ENCODE measurements at regions of chr12 and their contacts with region 1.

Region 1: GRCh38 chr12:109393437-109394345 is 46.0 kb downstream of the MYO1H start:
- DNase-seq: peak; percentile 81
- H3K4me3 Mint-ChIP-seq: no peak overlapping the region
- H3K27ac Mint-ChIP-seq: no peak overlapping the region
- H3K4me1 Mint-ChIP-seq: no peaks in the 10 kb centered on the region
- H3K27me3 Mint-ChIP-seq: peaks cover 15% of the 10 kb centered on the region

Region 2: DNA sequence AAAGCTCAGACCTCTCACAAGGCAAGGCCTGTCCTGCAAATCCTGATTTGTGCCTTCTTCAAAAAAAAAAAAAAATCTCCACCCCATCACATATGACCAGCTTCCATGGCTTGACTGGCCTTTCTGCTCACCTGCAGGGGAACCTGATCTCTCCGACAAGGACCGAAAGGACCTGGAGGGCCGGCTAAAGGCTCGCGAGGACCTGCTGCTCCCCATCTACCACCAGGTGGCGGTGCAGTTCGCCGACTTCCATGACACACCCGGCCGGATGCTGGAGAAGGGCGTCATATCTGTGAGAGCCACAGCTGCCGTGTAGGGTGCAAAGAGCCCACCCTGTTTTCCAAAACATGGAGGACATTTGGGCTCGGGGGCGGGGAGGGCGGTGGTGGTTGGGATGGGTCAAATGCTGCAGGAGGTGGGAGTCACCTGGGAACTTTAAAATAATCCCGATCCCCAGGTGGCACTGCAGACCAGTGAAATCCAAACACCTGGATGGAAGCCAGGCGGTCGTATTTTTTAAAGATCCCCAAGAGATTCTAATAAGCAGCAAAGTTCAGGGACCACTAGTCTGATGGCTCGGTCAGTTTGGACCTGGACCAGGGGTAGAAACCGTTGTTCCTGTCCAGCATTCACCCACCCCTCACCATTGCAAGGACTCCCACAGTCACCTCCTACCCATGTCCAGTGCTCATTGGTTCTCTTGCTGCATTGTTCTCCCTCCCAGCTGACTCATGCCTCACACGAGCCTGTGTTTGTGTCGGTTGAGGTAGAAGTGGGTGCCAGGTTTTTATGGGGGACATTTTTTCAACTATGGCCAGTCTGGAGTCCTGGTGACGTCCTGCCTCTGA is 129.4 kb before region 1 on chr12:
- intact Hi-C with region 1: loop called (anchors 2 kb)
- DNase-seq: peak; percentile 78
- H3K4me3 Mint-ChIP-seq: no peak overlapping the region
- H3K27ac Mint-ChIP-seq: no peak overlapping the region
- H3K4me1 Mint-ChIP-seq: no peaks in the 10 kb centered on the region
- H3K27me3 Mint-ChIP-seq: no peaks in the 10 kb centered on the region

Measured in activated CD4-positive, alpha-beta T cell treated with anti-CD3 and anti-CD28 coated beads, Interleukin-2, amount 10 ng/mL, durations not matched to agents 24 days and 14 days (primary cell).